ENCODE measurements at regions of chr10 and their contacts with region 1.

Region 1: GRCh38 chr10:21533467-21534279 is at the start of gene MLLT10:
- DNase-seq: peak; percentile 90 to 96 (median 94)
- ATAC-seq: peak; percentile 95
- H3K4me3 ChIP-seq: peak within 1 kb of the TSS; percentile 81
- H3K4me3 Mint-ChIP-seq: peak within 1 kb of the TSS; percentile 90 to 98 (median 97)
- H3K27ac ChIP-seq: peak within 1 kb of the TSS; percentile 83
- H3K27ac Mint-ChIP-seq: peak within 1 kb of the TSS; percentile 91 to 98 (median 97)
- H3K4me1 ChIP-seq: peaks cover 8 to 15% of the 10 kb centered on the region in 2 donors
- H3K4me1 Mint-ChIP-seq: peaks cover 14 to 36% (median 27%) of the 10 kb centered on the region in 7 donors
- H3K27me3 ChIP-seq: no peaks in the 10 kb centered on the region
- H3K27me3 Mint-ChIP-seq: peaks cover 0 to 18% (median 0%) of the 10 kb centered on the region in 5 donors
- total RNA-seq, gene MLLT10: 50.0 to 74.2 (median 67.9) TPM

Region 2: GRCh38 chr10:21516242-21517131 is 17.2 kb before region 1 on chr10:
- CTCF ChIA-PET with region 1: interaction called, 3 read pairs
- POLR2A ChIA-PET with region 1: interaction called, 13 read pairs
- intact Hi-C with region 1: loop called (anchors 1 kb)
- DNase-seq: peak in 8 of 9 donors; percentile 27 to 59 (median 40)
- ATAC-seq: peak; percentile 85
- H3K4me3 ChIP-seq: peak overlapping the region; percentile 28
- H3K4me3 Mint-ChIP-seq: peak overlapping the region; percentile 60 to 87 (median 80)
- H3K27ac ChIP-seq: no peak overlapping the region
- H3K27ac Mint-ChIP-seq: no peak overlapping the region
- H3K4me1 ChIP-seq: peaks cover 29 to 37% of the 10 kb centered on the region in 2 donors
- H3K4me1 Mint-ChIP-seq: peaks cover 17 to 46% (median 41%) of the 10 kb centered on the region in 7 donors
- H3K27me3 ChIP-seq: peaks cover 53 to 57% of the 10 kb centered on the region in 2 donors
- H3K27me3 Mint-ChIP-seq: peaks cover 68 to 86% (median 85%) of the 10 kb centered on the region in 5 donors

Region 3: DNA sequence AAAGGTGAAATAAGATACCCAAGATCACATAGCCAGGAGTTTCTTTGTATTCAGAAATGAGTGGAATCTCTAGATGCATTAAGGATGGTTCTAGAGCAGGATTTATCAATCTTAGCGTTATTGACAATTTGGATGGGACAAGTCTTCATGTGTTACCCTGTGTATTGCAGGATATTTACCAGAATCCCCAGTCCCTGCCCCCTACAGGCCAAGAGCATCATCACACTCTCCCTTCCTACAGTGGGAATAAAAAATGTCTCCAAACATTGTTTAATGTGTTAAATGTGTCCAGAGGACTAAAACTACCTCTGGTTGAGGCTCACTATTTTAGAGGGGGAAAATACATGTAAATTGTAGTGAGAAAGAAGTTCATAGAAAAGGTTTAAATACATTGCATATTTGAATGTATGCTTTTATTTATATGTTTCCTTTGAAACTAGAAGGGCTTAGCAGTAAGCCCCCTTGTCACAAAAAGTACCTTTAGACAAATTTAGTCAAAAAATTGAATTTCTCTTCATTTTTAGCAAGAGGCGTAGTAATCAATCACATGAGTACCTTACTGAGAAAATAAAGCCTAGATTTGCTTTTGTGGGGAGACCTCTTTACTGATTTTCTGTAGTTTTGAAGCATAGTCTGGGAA is 141.6 kb after region 1 on chr10:
- CTCF ChIA-PET with region 1: no interaction called
- POLR2A ChIA-PET with region 1: no interaction called
- intact Hi-C with region 1: loop called in 1 of 2 experiments (anchors 5 kb)
- DNase-seq: peak in 5 of 9 donors; percentile 8 to 35 (median 14)
- ATAC-seq: peak; percentile 73
- H3K4me3 ChIP-seq: no peak overlapping the region
- H3K4me3 Mint-ChIP-seq: no peak overlapping the region
- H3K27ac ChIP-seq: no peak overlapping the region
- H3K27ac Mint-ChIP-seq: no peak overlapping the region
- H3K4me1 ChIP-seq: no peaks in the 10 kb centered on the region
- H3K4me1 Mint-ChIP-seq: peaks cover 4 to 31% (median 20%) of the 10 kb centered on the region in 7 donors
- H3K27me3 ChIP-seq: no peaks in the 10 kb centered on the region
- H3K27me3 Mint-ChIP-seq: no peaks in the 10 kb centered on the region

Region 4: DNA sequence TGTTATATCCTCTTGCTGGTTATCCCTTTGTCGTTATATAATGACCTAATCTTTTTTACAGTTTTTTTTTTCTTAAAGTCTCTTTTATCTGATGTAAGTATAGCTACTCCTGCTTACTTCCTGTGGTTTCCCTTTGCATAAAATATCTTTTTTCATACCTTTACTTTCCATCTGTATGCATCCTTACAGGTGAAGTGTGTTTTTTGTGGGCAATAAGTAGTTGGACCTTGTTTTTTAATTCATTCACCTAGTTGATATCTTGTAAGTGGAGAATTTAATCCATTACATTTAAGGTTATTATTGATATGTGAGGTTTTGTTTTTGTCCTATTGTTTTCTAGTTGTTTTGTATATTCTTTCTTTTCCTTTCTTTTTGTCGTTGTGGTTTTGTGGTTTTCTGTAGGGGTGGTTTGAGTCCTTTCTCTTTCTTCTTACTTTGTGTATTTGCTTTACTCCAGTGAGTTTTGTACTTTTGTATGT is 169.0 kb after region 1 on chr10:
- CTCF ChIA-PET with region 1: no interaction called
- POLR2A ChIA-PET with region 1: no interaction called
- intact Hi-C with region 1: loop called in 1 of 2 experiments (anchors 2 kb)
- DNase-seq: peak in 7 of 9 donors; percentile 33 to 80 (median 72)
- ATAC-seq: peak; percentile 76
- H3K4me3 ChIP-seq: no peak overlapping the region
- H3K4me3 Mint-ChIP-seq: peak overlapping the region; percentile 54 to 77 (median 70)
- H3K27ac ChIP-seq: no peak overlapping the region
- H3K27ac Mint-ChIP-seq: peak overlapping the region; percentile 28 to 90 (median 73)
- H3K4me1 ChIP-seq: peaks cover 14 to 21% of the 10 kb centered on the region in 2 donors
- H3K4me1 Mint-ChIP-seq: peaks cover 26 to 50% (median 44%) of the 10 kb centered on the region in 7 donors
- H3K27me3 ChIP-seq: no peaks in the 10 kb centered on the region
- H3K27me3 Mint-ChIP-seq: peaks cover 0 to 5% (median 0%) of the 10 kb centered on the region in 5 donors

Region 5: DNA sequence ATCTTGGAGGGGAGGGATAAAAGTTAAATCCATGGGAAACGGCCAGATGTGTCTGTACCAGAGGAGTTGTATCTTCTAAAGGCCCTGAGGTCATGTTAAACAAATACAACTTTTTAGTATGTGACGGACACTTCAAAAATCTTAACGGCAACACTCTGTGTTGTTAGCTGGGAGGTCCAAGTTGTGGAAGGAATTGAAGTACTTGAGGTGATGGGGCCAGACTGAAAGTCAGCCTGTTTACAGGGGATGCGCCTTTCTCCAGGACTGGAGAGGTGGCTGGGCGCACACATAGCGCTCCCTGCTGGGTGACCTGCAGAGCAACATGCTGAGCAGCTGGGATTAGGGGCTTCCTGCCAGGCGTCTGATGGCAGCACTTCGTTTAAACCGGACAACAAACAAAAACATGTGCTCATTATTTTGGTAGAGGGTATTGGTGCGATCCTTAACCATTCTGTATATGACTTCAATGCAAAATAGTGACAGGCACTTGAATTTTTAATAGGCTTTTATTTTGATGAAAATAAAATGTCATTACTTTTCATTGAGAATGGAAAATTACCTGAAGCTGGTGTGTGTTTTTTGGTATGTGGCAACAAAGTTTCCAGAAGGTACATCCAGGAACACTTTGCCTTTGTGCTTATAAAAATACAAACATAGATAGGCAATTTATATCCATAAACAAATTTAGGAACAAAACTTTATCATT is 198.5 kb after region 1 on chr10:
- CTCF ChIA-PET with region 1: no interaction called
- POLR2A ChIA-PET with region 1: no interaction called
- intact Hi-C with region 1: loop called in 1 of 2 experiments (anchors 10 kb)
- DNase-seq: peak in 6 of 9 donors; percentile 27 to 48 (median 34)
- ATAC-seq: peak; percentile 76
- H3K4me3 ChIP-seq: no peak overlapping the region
- H3K4me3 Mint-ChIP-seq: no peak overlapping the region
- H3K27ac ChIP-seq: no peak overlapping the region
- H3K27ac Mint-ChIP-seq: peak overlapping the region in 4 of 9 donors; percentile 3 to 77 (median 60)
- H3K4me1 ChIP-seq: peaks cover 0 to 19% of the 10 kb centered on the region in 2 donors
- H3K4me1 Mint-ChIP-seq: peaks cover 19 to 42% (median 35%) of the 10 kb centered on the region in 7 donors
- H3K27me3 ChIP-seq: no peaks in the 10 kb centered on the region
- H3K27me3 Mint-ChIP-seq: no peaks in the 10 kb centered on the region

Region 6: GRCh38 chr10:22228943-22229801 is 695.5 kb after region 1 on chr10:
- CTCF ChIA-PET with region 1: no interaction called
- POLR2A ChIA-PET with region 1: no interaction called
- intact Hi-C with region 1: loop called (anchors 1 kb)
- DNase-seq: peak; percentile 74 to 94 (median 92)
- ATAC-seq: peak; percentile 95
- H3K4me3 ChIP-seq: peak overlapping the region; percentile 85
- H3K4me3 Mint-ChIP-seq: peak overlapping the region; percentile 84 to 99 (median 94)
- H3K27ac ChIP-seq: peak overlapping the region; percentile 70
- H3K27ac Mint-ChIP-seq: peak overlapping the region; percentile 96 to 100 (median 99)
- H3K4me1 ChIP-seq: peaks cover 6 to 8% of the 10 kb centered on the region in 2 donors
- H3K4me1 Mint-ChIP-seq: peaks cover 11 to 27% (median 15%) of the 10 kb centered on the region in 7 donors
- H3K27me3 ChIP-seq: no peaks in the 10 kb centered on the region
- H3K27me3 Mint-ChIP-seq: peaks cover 0 to 20% (median 5%) of the 10 kb centered on the region in 5 donors

Region 7: GRCh38 chr10:22335173-22336123 is 801.8 kb after region 1 on chr10:
- CTCF ChIA-PET with region 1: no interaction called
- POLR2A ChIA-PET with region 1: no interaction called
- intact Hi-C with region 1: loop called in 1 of 2 experiments (anchors 2 kb)
- DNase-seq: peak; percentile 51 to 83 (median 77)
- ATAC-seq: peak; percentile 90
- H3K4me3 ChIP-seq: peak overlapping the region; percentile 57
- H3K4me3 Mint-ChIP-seq: peak overlapping the region; percentile 82 to 91 (median 87)
- H3K27ac ChIP-seq: peak overlapping the region; percentile 63
- H3K27ac Mint-ChIP-seq: peak overlapping the region; percentile 84 to 95 (median 92)
- H3K4me1 ChIP-seq: peaks cover 37 to 38% of the 10 kb centered on the region in 2 donors
- H3K4me1 Mint-ChIP-seq: peaks cover 7 to 55% (median 35%) of the 10 kb centered on the region in 7 donors
- H3K27me3 ChIP-seq: peaks cover 25 to 47% of the 10 kb centered on the region in 2 donors
- H3K27me3 Mint-ChIP-seq: peaks cover 30 to 57% (median 52%) of the 10 kb centered on the region in 5 donors